ENCODE measurements at regions of chr17 and their contacts with region 1.

Region 1: DNA sequence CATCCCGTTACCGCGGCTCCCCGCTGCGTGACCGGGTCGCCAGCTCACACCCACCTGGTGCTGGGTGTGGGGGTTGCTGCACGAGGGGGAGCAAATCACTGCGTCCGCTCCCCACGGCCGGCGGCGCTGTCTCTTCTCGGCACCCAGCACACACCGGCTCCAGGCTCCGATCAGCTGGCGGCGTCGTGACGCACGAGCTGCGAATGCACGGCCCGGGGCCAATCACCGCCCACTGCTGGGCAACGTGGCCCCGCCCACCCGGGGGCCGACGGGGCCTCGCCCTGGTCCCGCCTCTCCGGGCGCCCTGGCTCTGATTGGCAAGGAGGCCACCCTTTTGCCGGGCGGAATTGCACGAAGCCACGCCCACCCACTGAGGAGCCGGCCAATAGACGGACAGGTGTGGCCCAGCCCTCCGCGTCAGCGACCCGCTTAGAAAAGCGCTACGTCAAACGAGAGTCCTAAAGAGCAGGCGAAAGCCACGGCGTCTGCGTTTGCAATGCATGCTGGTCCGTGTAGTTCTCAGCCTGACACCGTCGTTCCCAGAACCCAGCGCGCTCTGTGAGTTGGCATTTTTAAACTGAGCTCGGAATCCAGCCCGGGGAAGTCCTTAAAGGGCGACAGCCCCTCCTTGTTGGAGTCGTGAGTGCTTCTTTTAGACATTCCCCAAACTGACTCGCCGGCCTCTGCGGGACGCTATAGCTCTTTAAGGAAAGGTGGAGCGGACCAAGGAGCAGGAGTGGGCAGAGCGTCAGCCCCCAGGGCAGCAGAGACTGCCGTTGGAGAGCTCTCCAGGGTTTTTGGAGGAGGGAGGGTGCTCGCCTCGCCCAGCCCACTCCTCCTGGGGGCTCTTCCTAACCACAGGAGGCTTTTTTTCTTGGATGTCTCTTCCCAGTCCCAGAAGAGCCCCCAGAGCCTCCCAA is 6.2 kb upstream of the TLCD2 start:
- DNase-seq: peak; percentile 100
- H3K4me3 Mint-ChIP-seq: peak overlapping the region; percentile 88
- H3K27ac Mint-ChIP-seq: peak overlapping the region; percentile 97
- H3K4me1 Mint-ChIP-seq: peaks cover 22% of the 10 kb centered on the region
- H3K27me3 Mint-ChIP-seq: peaks cover 3% of the 10 kb centered on the region

Region 2: DNA sequence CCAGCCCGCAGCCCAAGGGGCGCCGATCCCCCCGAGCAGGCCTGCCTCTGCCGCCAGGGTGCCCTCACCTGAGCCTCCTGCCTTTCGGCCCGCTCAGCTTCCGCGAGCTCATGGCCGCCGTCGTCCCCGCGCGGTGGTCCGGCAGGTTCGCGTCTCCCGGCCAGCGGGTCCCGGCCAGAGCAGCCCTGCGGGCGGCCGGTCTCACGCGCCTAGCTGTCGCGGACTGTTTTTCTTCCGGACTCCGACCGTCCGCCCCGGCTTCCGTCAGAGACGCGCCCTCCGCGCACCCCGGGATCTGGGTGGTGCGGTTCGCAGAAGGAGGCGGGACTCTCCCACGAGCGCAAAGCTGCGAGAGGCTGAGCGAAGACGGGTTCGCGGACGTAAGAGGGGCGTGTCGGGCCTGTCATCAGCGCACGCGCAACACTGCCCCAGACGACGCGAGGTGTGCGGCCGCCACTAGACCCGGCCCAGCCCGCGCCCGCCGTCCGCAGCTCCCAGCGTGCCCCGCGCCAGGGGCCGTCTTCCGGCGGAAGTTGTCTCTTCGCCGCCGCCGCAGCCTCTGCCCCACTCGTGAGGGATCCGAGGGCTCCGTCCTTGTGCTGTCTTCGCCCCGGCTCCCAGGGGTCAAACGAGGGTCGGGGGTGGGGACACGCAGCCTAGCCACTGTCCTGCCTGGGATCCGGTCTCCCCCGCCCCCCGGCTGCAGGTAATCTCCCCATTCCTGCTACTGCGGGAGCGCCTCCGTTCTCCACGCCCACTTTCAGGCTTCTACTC is 199.8 kb before region 1 on chr17 and contains the start of gene INPP5K:
- CTCF ChIA-PET with region 1: no interaction called
- intact Hi-C with region 1: loop called (anchors 1 kb)
- DNase-seq: peak; percentile 98
- H3K4me3 Mint-ChIP-seq: peak within 1 kb of the TSS; percentile 80
- H3K27ac Mint-ChIP-seq: peak within 1 kb of the TSS; percentile 54
- H3K4me1 Mint-ChIP-seq: peaks cover 26% of the 10 kb centered on the region
- H3K27me3 Mint-ChIP-seq: no peaks in the 10 kb centered on the region
- total RNA-seq, gene INPP5K: 17.1 to 18.2 TPM

Region 3: GRCh38 chr17:1638171-1638952 is 78.0 kb before region 1 on chr17:
- CTCF ChIA-PET with region 1: no interaction called
- intact Hi-C with region 1: no loop called
- DNase-seq: no peak
- H3K4me3 Mint-ChIP-seq: no peak overlapping the region
- H3K27ac Mint-ChIP-seq: no peak overlapping the region
- H3K4me1 Mint-ChIP-seq: no peaks in the 10 kb centered on the region
- H3K27me3 Mint-ChIP-seq: no peaks in the 10 kb centered on the region

Region 4: GRCh38 chr17:1648963-1649843 is 67.1 kb before region 1 on chr17:
- CTCF ChIA-PET with region 1: interaction called, 9 read pairs
- intact Hi-C with region 1: loop called (anchors 1 kb)
- DNase-seq: peak; percentile 94
- H3K4me3 Mint-ChIP-seq: peak overlapping the region; percentile 62
- H3K27ac Mint-ChIP-seq: no peak overlapping the region
- H3K4me1 Mint-ChIP-seq: peaks cover 40% of the 10 kb centered on the region
- H3K27me3 Mint-ChIP-seq: no peaks in the 10 kb centered on the region

Region 5: GRCh38 chr17:1684378-1685189 is 31.8 kb before region 1 on chr17 and contains the start of gene PRPF8:
- CTCF ChIA-PET with region 1: no interaction called
- intact Hi-C with region 1: loop called (anchors 1 kb)
- DNase-seq: peak; percentile 99
- H3K4me3 Mint-ChIP-seq: peak within 1 kb of the TSS; percentile 95
- H3K27ac Mint-ChIP-seq: peak within 1 kb of the TSS; percentile 93
- H3K4me1 Mint-ChIP-seq: peaks cover 31% of the 10 kb centered on the region
- H3K27me3 Mint-ChIP-seq: no peaks in the 10 kb centered on the region
- total RNA-seq, gene PRPF8: 458 to 479 TPM

Region 6: GRCh38 chr17:1820528-1821252 is 104.4 kb after region 1 on chr17:
- CTCF ChIA-PET with region 1: no interaction called
- intact Hi-C with region 1: no loop called
- DNase-seq: no peak
- H3K4me3 Mint-ChIP-seq: no peak overlapping the region
- H3K27ac Mint-ChIP-seq: no peak overlapping the region
- H3K4me1 Mint-ChIP-seq: peaks cover 13% of the 10 kb centered on the region
- H3K27me3 Mint-ChIP-seq: no peaks in the 10 kb centered on the region

Region 7: DNA sequence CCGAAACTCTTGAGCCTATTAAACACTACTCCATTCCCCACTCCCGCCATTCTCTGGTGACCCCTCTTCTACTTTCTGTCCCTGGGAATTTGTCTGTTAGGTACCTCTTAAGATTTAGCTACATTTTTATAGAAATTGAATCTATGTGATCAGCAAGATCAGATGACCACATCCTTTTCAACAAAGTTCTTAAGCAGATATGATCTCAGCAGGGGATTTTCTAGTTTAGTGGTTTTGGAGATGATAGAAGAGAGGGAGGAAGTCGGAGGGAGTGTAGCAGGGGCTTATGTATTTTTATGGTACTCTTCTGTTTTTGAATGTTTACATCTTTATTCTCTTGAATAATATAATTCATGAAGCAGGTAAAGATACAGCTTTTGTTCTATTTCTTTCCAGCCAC is 154.3 kb after region 1 on chr17:
- CTCF ChIA-PET with region 1: interaction called, 25 read pairs
- intact Hi-C with region 1: loop called (anchors 1 kb)
- DNase-seq: no peak
- H3K4me3 Mint-ChIP-seq: no peak overlapping the region
- H3K27ac Mint-ChIP-seq: peak overlapping the region; percentile 70
- H3K4me1 Mint-ChIP-seq: peaks cover 50% of the 10 kb centered on the region
- H3K27me3 Mint-ChIP-seq: no peaks in the 10 kb centered on the region

Region 8: DNA sequence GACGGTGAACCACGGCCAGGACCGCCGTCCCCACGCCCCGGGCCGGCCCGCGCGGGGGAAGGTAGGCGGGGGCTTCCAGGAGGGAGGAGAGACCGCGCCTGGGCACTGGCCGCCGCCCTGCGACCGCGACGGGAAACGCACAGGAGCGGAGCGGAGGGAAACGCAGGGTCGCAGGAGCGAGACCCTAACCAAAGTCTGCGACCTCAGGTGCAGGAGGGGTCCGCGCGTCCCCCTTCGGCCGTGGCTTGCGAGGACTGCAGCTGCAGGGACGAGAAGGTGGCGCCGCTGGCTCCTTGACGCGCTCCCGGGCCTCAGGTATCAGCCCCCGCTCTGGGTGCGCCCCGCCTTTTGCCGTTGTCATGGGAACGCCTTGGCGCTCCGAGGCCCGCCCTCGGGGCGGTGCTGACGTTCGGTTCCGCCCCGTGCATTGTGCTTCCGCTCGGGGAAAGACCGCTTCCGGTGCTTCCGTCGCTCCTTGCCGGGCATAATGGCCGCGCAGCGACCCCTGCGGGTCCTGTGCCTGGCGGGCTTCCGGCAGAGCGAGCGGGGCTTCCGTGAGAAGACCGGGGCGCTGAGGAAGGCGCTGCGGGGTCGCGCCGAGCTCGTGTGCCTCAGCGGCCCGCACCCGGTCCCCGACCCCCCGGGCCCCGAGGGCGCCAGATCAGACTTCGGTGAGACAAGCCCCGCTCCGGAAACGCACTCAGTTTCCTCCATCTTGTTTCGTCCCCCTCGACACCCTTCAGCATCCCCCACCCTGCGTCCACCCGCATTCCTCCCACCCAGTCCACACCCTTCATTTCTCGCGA is 325.4 kb after region 1 on chr17 and contains the start of gene OVCA2:
- CTCF ChIA-PET with region 1: interaction called, 7 read pairs
- intact Hi-C with region 1: loop called (anchors 1 kb)
- DNase-seq: peak; percentile 97
- H3K4me3 Mint-ChIP-seq: peak within 1 kb of the TSS; percentile 94
- H3K27ac Mint-ChIP-seq: peak within 1 kb of the TSS; percentile 93
- H3K4me1 Mint-ChIP-seq: peaks cover 27% of the 10 kb centered on the region
- H3K27me3 Mint-ChIP-seq: no peaks in the 10 kb centered on the region
- total RNA-seq, gene OVCA2: 22.7 to 24.7 TPM

Region 9: DNA sequence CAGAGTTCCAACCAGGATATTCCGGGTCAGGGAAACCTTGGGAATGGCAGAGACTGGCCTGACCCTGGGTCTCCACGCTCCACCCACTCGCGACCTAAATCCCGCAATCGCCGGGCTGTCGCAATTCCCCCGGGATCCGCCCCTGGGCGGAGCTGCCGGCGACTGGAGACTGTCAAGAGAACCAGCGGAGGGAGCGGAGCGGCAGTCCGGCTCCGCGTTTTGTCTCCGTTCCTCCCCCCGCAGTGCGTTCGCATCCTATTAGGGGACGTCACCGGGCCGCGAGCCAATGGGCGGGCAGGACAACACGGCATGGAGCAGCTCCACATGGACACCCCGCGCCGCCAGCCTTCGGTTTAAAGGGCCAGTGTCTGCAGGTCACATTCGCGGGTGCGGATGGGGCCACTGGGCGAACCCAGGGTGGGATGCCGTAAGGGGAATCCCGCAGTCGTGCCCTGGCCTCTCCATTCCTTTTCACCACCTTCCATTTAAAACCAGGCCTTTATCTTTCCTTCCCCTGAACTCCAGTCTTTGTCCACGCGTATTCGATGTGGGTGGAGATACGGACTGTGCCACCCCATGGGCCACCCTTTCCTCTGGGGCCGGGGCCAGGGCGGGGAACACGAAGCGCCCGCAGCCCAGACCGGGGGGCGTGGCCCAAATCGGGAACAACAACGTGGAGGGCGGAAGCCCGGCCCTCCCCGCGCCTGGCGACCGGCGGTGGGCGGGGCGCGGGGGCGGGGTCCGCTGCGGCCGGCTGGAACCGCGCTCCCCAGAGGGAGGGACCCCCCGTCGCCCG is 685.3 kb after region 1 on chr17:
- CTCF ChIA-PET with region 1: no interaction called
- intact Hi-C with region 1: loop called (anchors 2 kb)
- DNase-seq: peak; percentile 100
- H3K4me3 Mint-ChIP-seq: peak overlapping the region; percentile 98
- H3K27ac Mint-ChIP-seq: peak overlapping the region; percentile 96
- H3K4me1 Mint-ChIP-seq: peaks cover 37% of the 10 kb centered on the region
- H3K27me3 Mint-ChIP-seq: no peaks in the 10 kb centered on the region